ENCODE measurements at regions of chr9 and their contacts with region 1.

Region 1: DNA sequence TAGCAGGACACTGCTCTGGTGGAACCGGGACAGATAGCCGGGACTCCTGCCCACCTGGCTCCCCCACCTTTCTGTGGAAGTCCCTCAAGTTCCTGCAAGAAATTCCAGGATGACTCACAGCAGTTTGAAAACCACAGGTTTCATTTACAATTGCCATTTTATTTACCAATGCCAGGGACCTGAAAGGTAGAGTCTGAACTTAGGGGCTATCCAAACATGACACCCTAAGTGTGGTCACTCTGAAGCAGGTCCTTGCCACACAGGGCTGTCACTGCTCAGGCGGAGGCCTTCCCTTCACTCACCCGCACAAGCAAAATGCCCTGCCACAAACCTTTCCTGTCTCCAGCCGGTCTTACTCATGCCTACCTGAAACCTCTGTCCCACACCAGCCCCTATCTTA is 63.3 kb upstream of the TAF1L start:
- DNase-seq: no peak
- ATAC-seq: no peak
- H3K4me3 ChIP-seq: no peak overlapping the region
- H3K27ac ChIP-seq: no peak overlapping the region
- H3K4me1 ChIP-seq: no peaks in the 10 kb centered on the region
- H3K27me3 ChIP-seq: no peaks in the 10 kb centered on the region
- CTCF ChIP-seq: no peak

Region 2: GRCh38 chr9:32755730-32756129 is 57.0 kb after region 1 on chr9:
- intact Hi-C with region 1: loop called in 1 of 3 experiments (anchors 10 kb)
- DNase-seq: no peak
- ATAC-seq: no peak
- H3K4me3 ChIP-seq: no peak overlapping the region
- H3K27ac ChIP-seq: no peak overlapping the region
- H3K4me1 ChIP-seq: no peaks in the 10 kb centered on the region
- H3K27me3 ChIP-seq: peaks cover 0 to 4% (median 0%) of the 10 kb centered on the region in 4 donors
- CTCF ChIP-seq: no peak

Measured in pancreas (tissue), 10 donors.